Activated CD4-positive, alpha-beta T cell treated with anti-CD3 and anti-CD28 coated beads, Interleukin-2, amount 10 ng/mL, durations not matched to agents 24 days and 14 days (primary cell): ENCODE measurements at regions of chr1 and their contacts with region 1.

Region 1: GRCh38 chr1:186985889-186986491 is 157.2 kb downstream of the PLA2G4A start:
- DNase-seq: peak; percentile 70
- H3K4me3 Mint-ChIP-seq: no peak overlapping the region
- H3K27ac Mint-ChIP-seq: no peak overlapping the region
- H3K4me1 Mint-ChIP-seq: no peaks in the 10 kb centered on the region
- H3K27me3 Mint-ChIP-seq: peaks cover 3% of the 10 kb centered on the region

Region 2: DNA sequence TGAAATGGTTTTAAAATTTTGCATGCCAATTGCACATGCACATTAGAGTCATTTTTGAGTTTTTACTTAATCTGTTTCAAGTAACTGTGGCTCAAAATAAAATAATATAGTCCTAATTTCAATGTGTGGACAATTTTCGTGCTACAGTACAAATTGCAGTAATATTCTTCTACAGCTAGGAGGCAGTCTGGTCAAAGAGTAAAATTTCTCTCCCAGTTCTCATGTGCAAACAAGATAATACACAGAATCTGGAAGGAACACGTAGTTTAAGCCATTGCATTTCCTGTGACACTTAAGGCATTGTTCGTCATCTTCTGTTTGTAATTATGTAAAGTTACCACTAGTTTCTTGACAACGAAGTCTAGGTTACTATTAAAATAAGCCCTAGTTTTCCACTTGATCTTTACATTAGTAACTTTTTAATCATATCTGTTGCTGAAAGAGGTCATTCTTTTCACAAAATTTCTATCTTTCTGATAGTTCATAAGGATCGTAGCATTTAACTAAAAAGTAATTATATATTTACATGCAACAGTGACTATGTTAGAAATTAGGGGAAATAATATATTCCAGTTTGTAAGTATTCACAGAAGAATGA is 581.4 kb before region 1 on chr1:
- intact Hi-C with region 1: loop called (anchors 1 kb)
- DNase-seq: peak; percentile 74
- H3K4me3 Mint-ChIP-seq: no peak overlapping the region
- H3K27ac Mint-ChIP-seq: no peak overlapping the region
- H3K4me1 Mint-ChIP-seq: peaks cover 9% of the 10 kb centered on the region
- H3K27me3 Mint-ChIP-seq: no peaks in the 10 kb centered on the region

Region 3: GRCh38 chr1:186482661-186483255 is 503.2 kb before region 1 on chr1:
- intact Hi-C with region 1: loop called (anchors 1 kb)
- DNase-seq: peak; percentile 82
- H3K4me3 Mint-ChIP-seq: no peak overlapping the region
- H3K27ac Mint-ChIP-seq: no peak overlapping the region
- H3K4me1 Mint-ChIP-seq: no peaks in the 10 kb centered on the region
- H3K27me3 Mint-ChIP-seq: peaks cover 20% of the 10 kb centered on the region

Region 4: GRCh38 chr1:186722711-186723309 is 263.2 kb before region 1 on chr1:
- intact Hi-C with region 1: loop called (anchors 1 kb)
- DNase-seq: peak; percentile 76
- H3K4me3 Mint-ChIP-seq: no peak overlapping the region
- H3K27ac Mint-ChIP-seq: no peak overlapping the region
- H3K4me1 Mint-ChIP-seq: no peaks in the 10 kb centered on the region
- H3K27me3 Mint-ChIP-seq: peaks cover 14% of the 10 kb centered on the region

Region 5: DNA sequence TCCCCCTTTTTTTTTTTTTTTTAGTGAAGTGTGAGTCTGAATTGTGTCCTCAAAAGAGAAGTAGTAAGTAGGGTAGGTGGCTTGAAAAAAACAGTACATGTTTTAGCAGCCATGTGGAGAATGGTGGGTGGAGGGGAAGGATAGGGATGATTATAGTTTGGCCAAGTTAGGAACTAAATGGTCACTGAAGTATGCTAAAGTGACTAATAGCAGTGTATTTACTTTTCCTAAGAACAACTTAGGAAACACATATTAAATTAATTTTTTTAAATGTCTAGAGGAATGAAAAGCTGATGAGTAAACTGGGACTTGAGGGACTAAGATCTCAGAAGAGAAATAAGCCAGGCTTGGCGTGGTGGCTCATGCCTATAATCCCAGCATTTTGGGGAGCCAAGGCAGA is 101.7 kb before region 1 on chr1:
- intact Hi-C with region 1: no loop called
- DNase-seq: no peak
- H3K4me3 Mint-ChIP-seq: no peak overlapping the region
- H3K27ac Mint-ChIP-seq: no peak overlapping the region
- H3K4me1 Mint-ChIP-seq: no peaks in the 10 kb centered on the region
- H3K27me3 Mint-ChIP-seq: no peaks in the 10 kb centered on the region

Region 6: DNA sequence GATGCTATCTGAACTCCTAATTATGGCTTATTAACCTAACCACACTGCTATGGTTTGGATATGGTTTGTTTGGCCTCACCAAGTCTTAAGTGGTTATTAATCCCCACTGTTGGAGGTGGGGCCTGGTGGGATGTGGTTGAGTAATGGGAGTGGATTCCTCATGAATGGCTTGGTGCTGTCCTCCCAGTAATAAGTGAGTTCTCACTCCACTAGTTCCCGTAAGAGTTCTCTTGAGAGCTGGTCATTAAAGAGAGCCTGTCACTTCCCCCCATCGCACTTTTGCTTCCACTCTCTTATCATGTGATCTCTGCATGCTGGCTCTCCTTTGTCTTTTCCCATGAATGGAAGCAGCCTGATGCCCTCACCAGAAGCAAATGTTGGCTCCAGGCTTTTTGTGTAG is 171.6 kb after region 1 on chr1:
- intact Hi-C with region 1: no loop called
- DNase-seq: no peak
- H3K4me3 Mint-ChIP-seq: no peak overlapping the region
- H3K27ac Mint-ChIP-seq: no peak overlapping the region
- H3K4me1 Mint-ChIP-seq: peaks cover 5% of the 10 kb centered on the region
- H3K27me3 Mint-ChIP-seq: no peaks in the 10 kb centered on the region